Activated naive CD4-positive, alpha-beta T cell treated with anti-CD3 and anti-CD28 coated beads for 36 hours (primary cell): ENCODE measurements at regions of chr2 and their contacts with region 1.

Region 1: GRCh38 chr2:222903234-222904220 is 42.7 kb downstream of the ACSL3 start:
- DNase-seq: peak; percentile 55
- H3K4me3 Mint-ChIP-seq: no peak overlapping the region
- H3K27ac Mint-ChIP-seq: no peak overlapping the region
- H3K4me1 Mint-ChIP-seq: peaks cover 23% of the 10 kb centered on the region
- H3K27me3 Mint-ChIP-seq: no peaks in the 10 kb centered on the region

Region 2: GRCh38 chr2:222690564-222691200 is 212.8 kb before region 1 on chr2:
- CTCF ChIA-PET with region 1: interaction called, 4 read pairs
- intact Hi-C with region 1: loop called (anchors 1 kb)
- DNase-seq: peak; percentile 84
- H3K4me3 Mint-ChIP-seq: no peak overlapping the region
- H3K27ac Mint-ChIP-seq: no peak overlapping the region
- H3K4me1 Mint-ChIP-seq: peaks cover 8% of the 10 kb centered on the region
- H3K27me3 Mint-ChIP-seq: no peaks in the 10 kb centered on the region

Region 3: GRCh38 chr2:222797261-222797660 is 106.3 kb before region 1 on chr2:
- CTCF ChIA-PET with region 1: interaction called, 8 read pairs
- intact Hi-C with region 1: loop called (anchors 1 kb)
- DNase-seq: no peak
- H3K4me3 Mint-ChIP-seq: no peak overlapping the region
- H3K27ac Mint-ChIP-seq: no peak overlapping the region
- H3K4me1 Mint-ChIP-seq: no peaks in the 10 kb centered on the region
- H3K27me3 Mint-ChIP-seq: no peaks in the 10 kb centered on the region

Region 4: GRCh38 chr2:222884114-222884771 is 19.3 kb before region 1 on chr2:
- CTCF ChIA-PET with region 1: no interaction called
- intact Hi-C with region 1: no loop called
- DNase-seq: no peak
- H3K4me3 Mint-ChIP-seq: no peak overlapping the region
- H3K27ac Mint-ChIP-seq: no peak overlapping the region
- H3K4me1 Mint-ChIP-seq: peaks cover 26% of the 10 kb centered on the region
- H3K27me3 Mint-ChIP-seq: no peaks in the 10 kb centered on the region